CD4-positive, alpha-beta memory T cell (primary cell): ENCODE measurements at regions of chrX and their contacts with region 1.

Region 1: GRCh38 chrX:22758807-22759481 is 240.8 kb upstream of the DDX53 start:
- DNase-seq: no peak
- H3K4me3 ChIP-seq: no peak overlapping the region
- H3K4me3 Mint-ChIP-seq: no peak overlapping the region
- H3K27ac ChIP-seq: no peak overlapping the region
- H3K27ac Mint-ChIP-seq: no peak overlapping the region
- H3K4me1 ChIP-seq: no peaks in the 10 kb centered on the region
- H3K4me1 Mint-ChIP-seq: no peaks in the 10 kb centered on the region
- H3K27me3 ChIP-seq: no peaks in the 10 kb centered on the region
- H3K27me3 Mint-ChIP-seq: no peaks in the 10 kb centered on the region

Region 2: DNA sequence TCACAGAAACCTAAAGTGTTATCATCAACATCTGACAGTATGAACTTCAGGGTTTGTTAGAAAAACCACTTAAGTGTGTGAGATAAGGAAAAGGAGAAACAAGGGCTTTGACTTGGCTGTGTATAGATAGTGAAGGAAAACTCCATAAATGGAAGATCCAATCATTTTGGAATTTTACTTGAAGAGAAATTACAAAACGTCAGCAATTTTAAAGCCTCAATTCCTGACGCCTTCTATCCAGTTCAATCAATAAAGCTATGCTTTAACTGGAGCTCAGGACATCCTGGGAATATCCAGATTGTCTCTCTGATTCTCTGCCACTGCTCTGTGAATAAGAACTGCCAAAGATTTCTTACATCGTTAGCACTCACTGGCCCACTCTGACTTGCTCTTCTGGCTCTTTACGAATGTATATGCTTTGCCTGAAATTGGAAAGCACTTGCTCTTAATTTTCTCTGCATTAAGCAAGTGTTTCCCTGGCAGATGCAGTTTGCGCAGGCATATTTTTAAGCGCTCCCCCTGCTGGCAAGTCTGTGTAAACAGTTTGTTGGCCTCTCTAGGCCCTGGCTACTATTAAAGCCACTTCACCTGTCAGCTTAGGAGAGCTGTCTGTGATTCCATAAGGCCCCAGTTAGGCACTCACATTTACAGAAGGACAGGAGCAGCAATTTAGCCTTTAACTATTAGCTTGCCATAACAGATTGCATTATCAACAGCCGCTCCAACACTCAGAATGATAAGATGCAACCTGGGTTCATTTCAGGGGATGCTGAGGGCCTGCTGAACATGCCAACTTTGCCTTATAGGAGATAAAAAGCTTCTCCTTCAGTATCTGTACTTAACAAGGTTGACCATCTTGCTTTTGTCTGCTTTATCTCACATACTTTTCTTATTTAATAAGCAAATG is 10.6 kb before region 1 on chrX:
- CTCF ChIA-PET with region 1: interaction called, 16 read pairs
- POLR2A ChIA-PET with region 1: no interaction called
- intact Hi-C with region 1: no loop called
- DNase-seq: peak in 4 of 5 donors; percentile 17 to 41 (median 31)
- H3K4me3 ChIP-seq: no peak overlapping the region
- H3K4me3 Mint-ChIP-seq: no peak overlapping the region
- H3K27ac ChIP-seq: no peak overlapping the region
- H3K27ac Mint-ChIP-seq: no peak overlapping the region
- H3K4me1 ChIP-seq: no peaks in the 10 kb centered on the region
- H3K4me1 Mint-ChIP-seq: no peaks in the 10 kb centered on the region
- H3K27me3 ChIP-seq: no peaks in the 10 kb centered on the region
- H3K27me3 Mint-ChIP-seq: peaks cover 0 to 3% of the 10 kb centered on the region in 2 donors